Heart right ventricle (tissue), 16 donors: ENCODE measurements at regions of chr10 and their contacts with region 1.

Region 1: GRCh38 chr10:28334296-28334695 is 31.4 kb upstream of the MPP7 start:
- DNase-seq: no peak
- ATAC-seq: peak in 7 of 8 donors; percentile 55 to 85 (median 71)
- H3K4me3 ChIP-seq: peak overlapping the region in 1 of 10 donors; percentile 38
- H3K27ac ChIP-seq: peak overlapping the region in 2 of 10 donors; percentile 18 to 85
- H3K4me1 ChIP-seq: peaks cover 0 to 43% (median 0%) of the 10 kb centered on the region in 9 donors
- H3K27me3 ChIP-seq: no peaks in the 10 kb centered on the region
- CTCF ChIP-seq: no peak

Region 2: DNA sequence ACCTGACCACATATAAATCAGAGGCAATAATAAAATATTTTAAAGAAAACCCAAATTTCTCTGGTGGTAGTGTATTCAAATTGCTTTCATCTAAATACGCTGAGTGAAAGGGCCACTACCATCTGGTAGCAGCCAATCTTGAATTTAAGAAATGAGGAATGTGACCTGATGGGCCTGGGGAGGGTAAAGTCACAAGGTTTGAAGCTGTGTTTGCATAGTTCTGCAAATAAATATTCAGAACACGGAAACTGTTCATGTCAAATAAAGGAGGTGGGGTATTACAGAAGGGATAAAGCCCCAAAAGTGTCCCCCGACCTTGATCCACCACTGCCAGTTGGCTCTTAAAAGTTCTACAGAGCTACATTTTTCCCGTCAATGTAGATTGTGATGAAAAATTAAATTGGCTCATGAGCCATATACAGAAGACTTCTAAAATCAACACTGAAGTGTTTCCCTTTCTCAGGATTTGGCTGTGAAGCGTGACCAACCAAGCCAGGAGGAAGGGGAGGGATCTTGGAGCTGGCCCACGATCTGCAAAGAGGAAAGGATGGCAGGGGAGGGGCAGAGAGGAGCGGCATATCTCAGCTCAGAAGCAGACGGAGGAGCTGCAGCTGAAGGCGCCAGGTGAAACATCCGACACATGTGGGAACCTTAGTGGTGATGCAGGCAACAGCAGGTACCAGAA is 71.0 kb before region 1 on chr10:
- intact Hi-C with region 1: loop called in 1 of 10 experiments (anchors 2 kb)
- DNase-seq: no peak
- ATAC-seq: peak in 2 of 8 donors; percentile 27 to 42
- H3K4me3 ChIP-seq: no peak overlapping the region
- H3K27ac ChIP-seq: no peak overlapping the region
- H3K4me1 ChIP-seq: peaks cover 0 to 11% (median 0%) of the 10 kb centered on the region in 9 donors
- H3K27me3 ChIP-seq: no peaks in the 10 kb centered on the region
- CTCF ChIP-seq: no peak

Region 3: GRCh38 chr10:28367929-28368484 is 33.7 kb after region 1 on chr10:
- intact Hi-C with region 1: loop called in 1 of 10 experiments (anchors 5 kb)
- DNase-seq: no peak
- ATAC-seq: peak in 5 of 8 donors; percentile 38 to 62 (median 52)
- H3K4me3 ChIP-seq: no peak overlapping the region
- H3K27ac ChIP-seq: peak overlapping the region in 1 of 10 donors; percentile 62
- H3K4me1 ChIP-seq: peaks cover 0 to 33% (median 0%) of the 10 kb centered on the region in 9 donors
- H3K27me3 ChIP-seq: peaks cover 0 to 4% (median 0%) of the 10 kb centered on the region in 7 donors
- CTCF ChIP-seq: no peak

Region 4: DNA sequence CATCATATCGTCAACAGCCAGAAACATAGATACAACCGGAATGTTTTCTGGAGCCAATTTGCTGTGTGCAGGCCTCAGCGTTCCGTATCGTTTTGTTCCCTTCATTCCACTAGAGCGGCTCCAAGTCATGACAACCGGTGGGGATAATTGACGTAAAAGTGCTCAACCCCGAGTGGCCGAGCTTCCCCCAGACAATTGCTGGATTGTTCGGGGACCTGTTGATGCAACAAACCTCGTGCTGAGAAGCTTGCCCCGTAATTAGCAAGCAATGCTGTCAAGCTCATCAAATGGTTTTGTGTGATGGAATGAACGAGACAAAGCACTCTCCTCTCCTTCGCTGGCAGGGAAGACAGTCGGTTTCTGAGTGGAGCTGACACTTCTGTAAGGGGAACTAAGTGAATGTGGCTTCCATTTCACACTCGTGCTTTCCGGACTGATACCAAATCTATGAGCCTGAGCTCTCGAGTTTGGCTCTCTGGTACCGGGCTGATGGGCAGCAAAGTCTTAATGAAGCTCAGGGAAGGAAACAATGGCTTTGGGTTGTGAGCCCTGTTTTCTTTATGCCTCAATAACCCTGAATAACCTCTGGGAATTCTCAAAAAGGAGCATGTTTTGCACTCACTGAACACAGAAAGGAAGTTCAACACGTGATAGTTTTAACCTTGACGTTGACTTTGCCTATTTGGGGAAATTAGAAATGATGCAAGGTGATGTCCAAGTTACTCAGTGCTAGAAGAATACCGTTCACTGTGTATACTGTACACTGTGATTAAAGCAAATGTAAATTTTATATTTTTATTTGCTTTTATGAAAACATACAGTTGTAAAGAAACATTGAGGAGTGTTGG is 563.5 kb after region 1 on chr10:
- intact Hi-C with region 1: no loop called
- DNase-seq: peak; percentile 11 to 34
- ATAC-seq: peak; percentile 72 to 98 (median 90)
- H3K4me3 ChIP-seq: peak overlapping the region in 1 of 10 donors; percentile 22
- H3K27ac ChIP-seq: peak overlapping the region; percentile 39 to 79 (median 66)
- H3K4me1 ChIP-seq: peaks cover 0 to 13% (median 7%) of the 10 kb centered on the region in 9 donors
- H3K27me3 ChIP-seq: no peaks in the 10 kb centered on the region
- CTCF ChIP-seq: no peak